GM12878 (cell line): ENCODE measurements at regions of chr11 and their contacts with region 1.

Region 1: GRCh38 chr11:5369793-5370192 is 13.8 kb upstream of the OR51M1 start:
- DNase-seq: no peak
- ATAC-seq: peak; percentile 83
- H3K4me3 ChIP-seq: no peak overlapping the region
- H3K27ac ChIP-seq: no peak overlapping the region
- H3K4me1 ChIP-seq: no peaks in the 10 kb centered on the region
- H3K27me3 ChIP-seq: no peaks in the 10 kb centered on the region
- CTCF ChIP-seq: peak in 2 of 3 experiments; percentile 22 to 61; a peak in 3 of 6 replicates
- EP300 ChIP-seq: no peak
- POLR2A ChIP-seq: no peak
- RAD21 ChIP-seq: peak; percentile 29

Region 2: GRCh38 chr11:5210376-5210885 is 159.4 kb before region 1 on chr11:
- CTCF ChIA-PET with region 1: no interaction called
- POLR2A ChIA-PET with region 1: interaction called, 10 read pairs
- RAD21 ChIA-PET with region 1: no interaction called
- SMC1A ChIA-PET with region 1: interaction called, 4 read pairs
- in situ Hi-C with region 1: no loop called
- intact Hi-C with region 1: no loop called
- DNase-seq: no peak
- ATAC-seq: no peak
- H3K4me3 ChIP-seq: no peak overlapping the region
- H3K27ac ChIP-seq: no peak overlapping the region
- H3K4me1 ChIP-seq: no peaks in the 10 kb centered on the region
- H3K27me3 ChIP-seq: no peaks in the 10 kb centered on the region
- CTCF ChIP-seq: no peak
- EP300 ChIP-seq: no peak
- POLR2A ChIP-seq: no peak
- RAD21 ChIP-seq: no peak

Region 3: DNA sequence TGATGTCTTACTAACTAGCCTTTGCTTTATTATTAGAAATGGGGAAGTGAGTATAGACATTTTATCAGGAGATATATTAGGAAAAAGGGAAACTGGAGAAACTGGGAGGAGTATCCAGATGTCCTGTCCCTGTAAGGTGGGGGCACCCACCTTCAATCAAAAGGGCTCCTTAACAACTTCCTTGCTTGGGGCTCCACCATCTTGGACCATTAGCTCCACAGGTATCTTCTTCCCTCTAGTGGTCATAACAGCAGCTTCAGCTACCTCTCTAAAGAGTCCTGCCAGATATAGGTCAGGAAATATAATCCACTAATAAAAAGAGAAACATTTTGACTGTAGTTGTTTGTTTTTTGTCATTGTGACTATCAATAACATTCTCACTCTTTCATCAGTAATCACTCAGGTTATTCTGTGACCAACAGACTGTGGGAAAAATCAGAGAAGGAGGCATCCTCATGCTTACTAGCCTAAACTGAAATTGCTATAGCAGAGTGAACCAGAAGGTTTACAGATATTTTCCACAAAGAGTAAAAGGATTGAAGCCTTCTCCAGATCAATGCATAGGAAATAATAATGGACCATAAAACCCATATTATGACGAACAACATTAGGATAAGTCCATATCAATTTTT is 78.5 kb before region 1 on chr11:
- CTCF ChIA-PET with region 1: no interaction called
- POLR2A ChIA-PET with region 1: no interaction called
- RAD21 ChIA-PET with region 1: no interaction called
- SMC1A ChIA-PET with region 1: no interaction called
- in situ Hi-C with region 1: no loop called
- intact Hi-C with region 1: loop called (anchors 2 kb)
- DNase-seq: no peak
- ATAC-seq: peak; percentile 97
- H3K4me3 ChIP-seq: no peak overlapping the region
- H3K27ac ChIP-seq: no peak overlapping the region
- H3K4me1 ChIP-seq: no peaks in the 10 kb centered on the region
- H3K27me3 ChIP-seq: no peaks in the 10 kb centered on the region
- CTCF ChIP-seq: peak; percentile 48 to 57 (median 56)
- EP300 ChIP-seq: no peak
- POLR2A ChIP-seq: no peak
- RAD21 ChIP-seq: peak; percentile 62